A549 (cell line): ENCODE measurements at regions of chr2 and their contacts with region 1.

Region 1: GRCh38 chr2:11129598-11130449 is 25.4 kb upstream of the SLC66A3 start:
- DNase-seq: peak; percentile 59 to 74
- ATAC-seq: peak; percentile 66 to 81
- H3K4me3 ChIP-seq: peak overlapping the region; percentile 45
- H3K27ac ChIP-seq: peak overlapping the region; percentile 67 to 77
- H3K4me1 ChIP-seq: peaks cover 16% of the 10 kb centered on the region; the same call in 2 of the 3 replicates
- CTCF ChIP-seq: peak; percentile 72
- EP300 ChIP-seq: no peak
- POLR2A ChIP-seq: no peak
- RAD21 ChIP-seq: peak; percentile 74 to 86

Region 2: GRCh38 chr2:10911261-10912075 is 218.4 kb before region 1 on chr2 and contains the start of gene KCNF1:
- CTCF ChIA-PET with region 1: interaction called, 123 read pairs
- POLR2A ChIA-PET with region 1: no interaction called
- DNase-seq: peak; percentile 79 to 83
- ATAC-seq: peak; percentile 75 to 82
- H3K4me3 ChIP-seq: peak within 1 kb of the TSS; percentile 57
- H3K27ac ChIP-seq: peak within 1 kb of the TSS; percentile 79 to 93
- H3K4me1 ChIP-seq: peaks cover 13% of the 10 kb centered on the region
- CTCF ChIP-seq: peak; percentile 52
- EP300 ChIP-seq: no peak
- POLR2A ChIP-seq: peak; percentile 38
- RAD21 ChIP-seq: peak; percentile 54 to 74
- polyA plus RNA-seq, gene KCNF1: 4.4 and 5.6 TPM in 2 replicates

Region 3: DNA sequence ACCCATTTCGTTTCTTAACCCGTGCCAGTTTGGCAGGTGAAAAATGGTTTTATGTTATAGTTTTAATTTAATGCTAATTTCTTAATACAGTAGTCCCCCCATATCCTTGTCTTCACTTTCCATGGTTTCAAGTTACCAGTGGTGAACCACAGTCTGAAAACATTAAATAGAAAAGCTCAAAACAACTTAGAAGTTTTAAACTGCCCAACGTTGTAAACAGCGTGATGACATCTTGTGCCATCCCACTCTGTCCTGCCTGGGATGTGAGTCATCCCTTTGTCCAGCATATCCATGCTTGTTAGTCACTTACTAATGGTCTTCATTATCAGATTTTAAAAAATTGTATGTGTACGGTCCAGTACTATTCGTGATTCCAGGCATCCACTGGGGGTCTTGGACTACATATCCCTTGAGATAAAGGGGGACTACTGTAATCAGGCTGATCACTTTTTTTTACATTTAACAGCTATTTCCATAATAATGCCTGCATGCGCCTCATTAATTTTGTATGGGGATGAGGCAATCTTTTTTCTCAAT is 57.3 kb after region 1 on chr2:
- CTCF ChIA-PET with region 1: interaction called, 19 read pairs
- POLR2A ChIA-PET with region 1: no interaction called
- DNase-seq: peak in 1 of 2 experiments; percentile 35
- ATAC-seq: peak; percentile 56 to 65; a peak in 4 of 6 replicates
- H3K4me3 ChIP-seq: no peak overlapping the region
- H3K27ac ChIP-seq: no peak overlapping the region
- H3K4me1 ChIP-seq: peaks cover 6% of the 10 kb centered on the region; the same call in 1 of the 3 replicates
- CTCF ChIP-seq: no peak
- EP300 ChIP-seq: no peak
- POLR2A ChIP-seq: no peak
- RAD21 ChIP-seq: no peak

Region 4: GRCh38 chr2:11281186-11281585 is 151.4 kb after region 1 on chr2:
- CTCF ChIA-PET with region 1: no interaction called
- POLR2A ChIA-PET with region 1: no interaction called
- DNase-seq: no peak
- ATAC-seq: no peak
- H3K4me3 ChIP-seq: no peak overlapping the region
- H3K27ac ChIP-seq: no peak overlapping the region
- H3K4me1 ChIP-seq: no peaks in the 10 kb centered on the region
- CTCF ChIP-seq: no peak
- EP300 ChIP-seq: no peak
- POLR2A ChIP-seq: no peak
- RAD21 ChIP-seq: no peak

Region 5: GRCh38 chr2:11329781-11330180 is 200.0 kb after region 1 on chr2:
- CTCF ChIA-PET with region 1: interaction called, 10 read pairs
- POLR2A ChIA-PET with region 1: no interaction called
- DNase-seq: no peak
- ATAC-seq: no peak
- H3K4me3 ChIP-seq: no peak overlapping the region
- H3K27ac ChIP-seq: no peak overlapping the region
- H3K4me1 ChIP-seq: peaks cover 23% of the 10 kb centered on the region
- CTCF ChIP-seq: no peak
- EP300 ChIP-seq: no peak
- POLR2A ChIP-seq: no peak
- RAD21 ChIP-seq: no peak

Region 6: DNA sequence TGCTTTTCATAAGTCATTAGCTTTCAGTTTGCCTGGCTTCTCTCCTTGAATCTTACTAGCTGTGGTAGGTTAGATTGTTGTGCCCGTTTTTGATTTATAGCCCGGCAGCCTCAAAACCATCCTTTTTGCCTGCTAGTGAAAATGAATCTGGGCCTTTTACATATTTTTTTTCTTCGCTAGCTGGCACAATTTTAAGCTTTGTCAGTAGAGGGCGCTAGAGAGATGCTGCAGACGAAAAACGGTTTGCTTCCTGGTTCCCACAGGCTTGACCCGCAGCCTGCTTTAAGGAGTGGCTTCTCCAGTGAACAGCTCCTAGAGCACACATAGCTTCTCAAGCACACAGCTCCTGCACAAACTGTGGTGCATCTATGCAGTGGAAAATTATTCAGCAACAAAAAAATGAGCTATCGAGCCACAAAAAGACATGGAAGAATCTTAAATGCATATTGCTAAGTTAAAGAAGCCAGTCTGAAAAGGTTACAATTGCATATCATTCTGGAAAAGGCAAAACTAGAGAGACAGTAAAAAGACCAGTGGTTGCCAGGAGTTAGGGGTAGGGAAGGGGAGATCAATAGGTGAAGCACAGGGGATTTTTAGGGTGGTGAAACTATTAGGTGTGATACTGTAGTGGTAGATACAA is 288.2 kb after region 1 on chr2:
- CTCF ChIA-PET with region 1: interaction called, 54 read pairs
- POLR2A ChIA-PET with region 1: no interaction called
- DNase-seq: peak; percentile 47 to 71
- ATAC-seq: peak in 1 of 2 experiments; percentile 48; a peak in 2 of 6 replicates
- H3K4me3 ChIP-seq: no peak overlapping the region
- H3K27ac ChIP-seq: no peak overlapping the region
- H3K4me1 ChIP-seq: no peaks in the 10 kb centered on the region
- CTCF ChIP-seq: peak; percentile 39
- EP300 ChIP-seq: no peak
- POLR2A ChIP-seq: no peak
- RAD21 ChIP-seq: peak in 1 of 2 experiments; percentile 49; a peak in 2 of 5 replicates

Region 7: DNA sequence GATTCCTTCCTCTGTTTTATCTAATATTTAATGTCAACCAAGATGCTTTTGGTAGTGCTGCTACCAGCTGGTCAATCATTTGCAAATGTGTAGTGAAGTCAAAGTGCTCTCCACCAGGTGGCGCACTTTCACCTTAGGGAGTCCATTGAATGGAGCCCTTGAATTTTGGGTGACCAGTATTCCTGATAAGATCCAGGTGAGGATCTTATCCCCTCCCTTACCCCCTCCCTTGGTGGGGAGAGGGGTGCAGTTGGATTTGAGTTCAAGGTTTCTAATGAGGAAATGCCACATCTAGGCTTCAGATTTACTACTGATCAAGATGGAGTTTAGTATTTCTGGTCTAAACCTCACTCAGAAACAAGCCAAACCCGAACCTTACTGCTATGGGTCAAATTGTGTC is 348.2 kb after region 1 on chr2:
- CTCF ChIA-PET with region 1: interaction called, 13 read pairs
- POLR2A ChIA-PET with region 1: no interaction called
- DNase-seq: peak; percentile 73 to 91
- ATAC-seq: peak; percentile 72 to 86
- H3K4me3 ChIP-seq: no peak overlapping the region
- H3K27ac ChIP-seq: no peak overlapping the region
- H3K4me1 ChIP-seq: no peaks in the 10 kb centered on the region
- CTCF ChIP-seq: peak; percentile 99
- EP300 ChIP-seq: no peak
- POLR2A ChIP-seq: no peak
- RAD21 ChIP-seq: peak; percentile 87 to 88

Region 8: DNA sequence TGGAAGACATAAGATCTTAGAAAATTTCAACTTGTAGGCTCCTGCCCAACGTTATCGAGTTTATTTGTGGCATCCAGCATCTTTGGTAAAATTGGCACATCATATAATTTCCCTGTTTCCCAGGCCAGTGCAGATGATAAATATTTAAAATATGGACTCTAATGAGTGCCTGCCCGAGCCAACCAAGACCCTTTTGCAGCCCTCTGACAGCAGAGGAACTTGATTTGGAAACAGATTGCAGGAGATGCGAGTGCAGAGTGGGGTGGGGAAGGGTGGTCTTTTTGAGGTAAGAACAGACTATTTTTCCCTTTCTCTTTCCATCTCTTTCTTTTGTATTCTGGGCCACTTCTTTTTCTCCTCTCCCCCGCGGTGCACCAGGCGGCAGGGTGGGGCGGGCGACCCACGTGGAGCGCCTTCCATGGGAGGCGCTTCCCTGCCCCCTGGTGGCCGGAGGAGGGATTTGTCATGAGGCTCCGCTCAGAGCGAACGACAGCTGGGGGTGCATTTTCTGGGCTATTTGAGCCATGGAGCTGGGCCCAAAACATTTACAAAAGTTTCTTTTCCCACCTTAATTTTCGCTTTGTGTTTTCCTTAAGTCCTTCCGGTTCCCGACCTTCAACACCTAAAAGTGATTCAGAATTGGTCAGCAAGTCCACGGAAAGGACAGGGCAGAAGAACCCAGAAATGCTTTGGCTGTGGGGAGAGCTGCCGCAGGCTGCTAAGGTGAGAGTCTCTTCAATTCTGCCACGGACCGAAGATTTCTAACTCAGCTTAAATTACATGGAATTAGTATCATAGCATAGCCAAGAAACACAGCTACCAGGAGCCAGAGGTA is 649.3 kb after region 1 on chr2:
- CTCF ChIA-PET with region 1: interaction called, 15 read pairs
- POLR2A ChIA-PET with region 1: no interaction called
- DNase-seq: peak; percentile 66 to 92
- ATAC-seq: peak; percentile 93 to 99
- H3K4me3 ChIP-seq: no peak overlapping the region
- H3K27ac ChIP-seq: peak overlapping the region; percentile 18 to 63; a peak in 4 of 6 replicates
- H3K4me1 ChIP-seq: 0 out of 3 replicates have a peak, but pooled peaks cover 3% of the 10 kb centered on the region
- CTCF ChIP-seq: peak; percentile 99
- EP300 ChIP-seq: no peak
- POLR2A ChIP-seq: no peak
- RAD21 ChIP-seq: peak; percentile 97 to 98